Panc1 (cell line): ENCODE measurements at regions of chr1 and their contacts with region 1.

Region 1: DNA sequence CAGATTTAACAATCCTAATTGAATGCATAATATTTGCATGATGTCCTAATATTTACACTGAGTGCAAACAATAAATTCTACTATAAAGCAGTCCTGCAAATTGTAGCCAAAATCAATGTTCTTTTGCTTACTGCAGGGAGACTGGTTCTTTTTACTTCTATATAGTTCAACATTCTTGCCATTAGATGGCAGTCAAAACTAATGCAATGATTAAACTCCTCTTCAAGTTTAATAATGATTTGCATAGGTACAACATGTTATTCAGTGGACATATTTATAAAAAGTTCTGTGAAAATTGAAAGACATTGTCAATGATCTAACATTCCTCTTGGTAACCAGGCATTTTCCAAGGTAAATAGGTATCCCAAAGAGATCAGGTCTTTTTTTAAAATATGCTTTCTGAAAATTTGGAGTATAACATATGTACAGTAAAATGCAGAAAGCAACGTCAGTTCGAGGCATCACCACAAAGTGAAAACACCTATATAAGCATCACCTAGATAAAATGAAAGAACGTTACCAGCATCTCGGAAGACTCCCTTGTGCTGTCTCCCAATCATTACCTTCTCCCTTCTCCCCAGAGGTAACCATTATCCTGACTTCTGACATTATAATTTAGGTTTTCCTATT is 9.8 kb upstream of the FNBP1L start:
- DNase-seq: no peak
- ATAC-seq: peak; percentile 71; the same call in 1 of the 2 replicates
- H3K4me3 ChIP-seq: no peak overlapping the region
- H3K27ac ChIP-seq: no peak overlapping the region
- H3K4me1 ChIP-seq: no peaks in the 10 kb centered on the region; the same call in none of the 2 replicates
- H3K27me3 ChIP-seq: no peaks in the 10 kb centered on the region
- CTCF ChIP-seq: peak; percentile 56; the same call in 1 of the 2 replicates

Region 2: GRCh38 chr1:93384656-93385055 is 53.4 kb before region 1 on chr1:
- CTCF ChIA-PET with region 1: interaction called, 15 read pairs
- POLR2A ChIA-PET with region 1: no interaction called
- in situ Hi-C with region 1: no loop called
- intact Hi-C with region 1: no loop called
- DNase-seq: no peak
- ATAC-seq: no peak
- H3K4me3 ChIP-seq: no peak overlapping the region
- H3K27ac ChIP-seq: no peak overlapping the region
- H3K4me1 ChIP-seq: no peaks in the 10 kb centered on the region
- H3K27me3 ChIP-seq: no peaks in the 10 kb centered on the region
- CTCF ChIP-seq: no peak

Region 3: DNA sequence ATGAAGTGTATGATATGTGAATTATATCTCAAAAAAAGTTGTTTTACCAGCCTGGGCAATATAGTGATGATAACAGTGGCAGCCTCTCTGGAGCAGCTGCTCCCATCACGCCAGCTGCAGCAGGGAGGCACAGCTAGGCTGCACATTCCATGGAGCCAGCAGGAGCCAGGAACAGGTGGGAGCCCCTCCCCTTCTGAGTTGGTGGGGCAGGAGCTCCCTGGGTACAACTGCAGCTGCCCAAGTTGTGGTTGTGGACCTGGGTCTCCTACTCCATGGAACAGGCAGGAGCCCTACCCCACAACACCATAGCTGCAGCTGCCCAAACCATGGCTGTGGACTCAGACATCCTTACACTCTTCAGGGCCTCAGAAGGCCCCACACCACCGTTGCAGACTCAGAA is 11.9 kb before region 1 on chr1:
- CTCF ChIA-PET with region 1: no interaction called
- POLR2A ChIA-PET with region 1: no interaction called
- in situ Hi-C with region 1: no loop called
- intact Hi-C with region 1: no loop called
- DNase-seq: no peak
- ATAC-seq: no peak
- H3K4me3 ChIP-seq: no peak overlapping the region
- H3K27ac ChIP-seq: no peak overlapping the region
- H3K4me1 ChIP-seq: no peaks in the 10 kb centered on the region
- H3K27me3 ChIP-seq: no peaks in the 10 kb centered on the region
- CTCF ChIP-seq: no peak

Region 4: GRCh38 chr1:93615582-93616150 is 177.6 kb after region 1 on chr1:
- CTCF ChIA-PET with region 1: no interaction called
- POLR2A ChIA-PET with region 1: no interaction called
- in situ Hi-C with region 1: no loop called
- intact Hi-C with region 1: loop called (anchors 10 kb)
- DNase-seq: no peak
- ATAC-seq: no peak; the same call in 1 of the 2 replicates
- H3K4me3 ChIP-seq: no peak overlapping the region
- H3K27ac ChIP-seq: peak overlapping the region; percentile 93
- H3K4me1 ChIP-seq: peaks cover 70% of the 10 kb centered on the region
- H3K27me3 ChIP-seq: no peaks in the 10 kb centered on the region
- CTCF ChIP-seq: no peak

Region 5: DNA sequence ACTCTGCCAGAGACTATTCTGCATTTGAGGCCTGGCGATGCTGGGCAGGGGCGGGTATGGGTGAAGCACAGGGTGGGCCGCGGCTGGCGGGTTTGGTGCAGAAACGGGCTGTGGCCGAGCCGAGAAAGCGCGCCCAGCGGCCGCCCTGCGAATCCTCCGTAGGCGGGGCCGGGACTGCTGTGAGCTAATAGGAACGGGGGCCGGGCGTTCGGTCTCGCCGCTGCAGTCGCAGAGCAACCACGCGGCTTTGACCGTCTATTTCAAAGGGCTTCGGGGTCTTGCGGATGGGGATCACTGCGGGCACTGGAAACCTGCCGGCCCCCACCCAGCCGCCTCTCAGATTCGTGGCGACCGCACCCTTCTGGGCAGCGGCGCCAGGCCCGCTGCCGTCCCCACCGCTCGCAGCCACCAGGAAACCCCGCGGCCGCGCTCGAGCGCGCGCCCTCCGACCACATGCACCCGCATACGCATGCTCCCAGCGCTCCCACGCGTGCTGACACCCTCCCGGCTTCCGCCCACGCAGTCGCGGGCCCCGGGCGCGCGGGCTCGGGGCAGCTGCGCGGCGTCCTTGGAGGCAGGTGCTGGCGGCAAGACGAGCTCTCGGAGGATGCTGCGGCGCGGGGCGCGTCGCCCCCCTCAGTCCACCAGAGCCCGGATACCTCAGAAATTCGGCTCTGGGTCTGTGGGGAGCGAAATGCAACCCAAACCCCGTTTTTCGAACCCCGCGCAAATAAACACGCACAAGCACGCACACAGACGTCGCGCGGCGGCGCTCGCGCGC is 408.3 kb after region 1 on chr1:
- CTCF ChIA-PET with region 1: interaction called, 3 read pairs
- POLR2A ChIA-PET with region 1: no interaction called
- in situ Hi-C with region 1: no loop called
- intact Hi-C with region 1: loop called (anchors 5 kb)
- DNase-seq: no peak
- ATAC-seq: peak; percentile 80
- H3K4me3 ChIP-seq: peak overlapping the region; percentile 69 to 74
- H3K27ac ChIP-seq: peak overlapping the region; percentile 55
- H3K4me1 ChIP-seq: peaks cover 11% of the 10 kb centered on the region; the same call in 1 of the 2 replicates
- H3K27me3 ChIP-seq: no peaks in the 10 kb centered on the region
- CTCF ChIP-seq: peak; percentile 51